Posterior vena cava (tissue), 2 donors: ENCODE measurements at regions of chr6 and their contacts with region 1.

Region 1: GRCh38 chr6:166806962-166807757 is 149.2 kb downstream of the RNASET2 start:
- DNase-seq: no peak

Region 2: DNA sequence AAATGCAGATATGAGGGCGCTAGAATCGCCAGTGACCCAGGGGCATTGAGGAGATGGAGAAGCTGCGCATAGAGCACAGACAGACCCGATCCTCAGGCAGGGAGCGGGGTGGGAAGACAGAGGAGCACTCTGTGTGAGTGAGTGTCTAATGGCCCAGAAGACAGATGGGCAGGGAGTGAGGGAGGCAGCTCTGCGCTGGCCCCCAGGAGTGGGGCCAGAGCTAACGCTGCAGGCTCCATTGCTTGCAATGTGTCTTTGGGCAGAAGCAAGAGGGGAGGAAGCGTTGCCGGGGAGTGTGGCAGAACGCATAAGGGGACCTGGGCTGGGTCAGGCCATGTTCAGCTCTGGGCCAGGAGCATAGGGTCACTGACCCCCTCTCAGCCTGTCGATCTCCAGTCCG is 846.5 kb before region 1 on chr6:
- intact Hi-C with region 1: no loop called
- DNase-seq: peak; percentile 62

Region 3: DNA sequence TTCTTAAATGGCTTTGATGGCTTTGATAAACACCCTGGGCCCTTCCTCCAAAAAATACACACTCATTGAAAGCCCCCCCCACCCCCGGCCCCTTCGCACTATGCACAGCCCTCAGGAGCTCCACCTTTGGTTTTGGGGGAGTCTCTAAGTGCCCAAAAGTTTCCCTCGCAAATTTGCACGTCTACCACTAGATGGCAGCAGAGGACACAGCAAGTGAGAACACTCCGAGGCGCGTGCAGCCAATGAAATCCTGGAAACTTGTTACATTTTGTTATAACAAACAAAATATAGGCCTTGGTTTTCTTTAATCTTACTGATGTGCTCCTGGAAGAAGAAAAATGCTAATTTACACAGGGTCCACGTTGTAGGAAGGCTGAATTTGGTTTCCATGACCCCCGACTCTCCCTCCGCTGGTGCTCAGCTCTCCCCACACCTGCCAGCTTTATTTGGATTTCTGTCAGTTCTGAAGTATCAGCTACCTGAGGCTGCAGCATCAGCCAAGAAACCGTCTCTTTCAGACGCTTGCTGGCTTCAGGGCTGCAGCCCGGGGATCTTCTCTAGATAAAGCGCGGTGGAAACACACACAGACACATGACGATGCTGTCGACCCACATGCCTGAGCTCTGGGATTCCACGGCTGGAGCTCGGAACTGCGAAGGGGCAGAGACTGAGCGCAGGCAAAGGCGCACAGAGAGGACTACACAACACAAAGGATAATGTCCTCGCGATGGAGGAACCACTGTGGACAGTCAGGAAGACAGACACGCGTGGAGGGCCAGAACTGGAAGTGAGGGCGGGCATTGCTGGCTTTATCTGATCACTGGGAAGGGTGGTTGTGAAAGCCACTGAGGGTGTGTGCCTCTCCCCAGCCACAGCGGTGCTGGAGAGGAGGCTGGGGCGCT is 31.7 kb before region 1 on chr6:
- intact Hi-C with region 1: no loop called
- DNase-seq: peak; percentile 80

Region 4: GRCh38 chr6:166872496-166873125 is 65.5 kb after region 1 on chr6:
- intact Hi-C with region 1: loop called in 1 of 2 experiments (anchors 2 kb)
- DNase-seq: no peak